ENCODE measurements at regions of chr1 and their contacts with region 1.

Region 1: DNA sequence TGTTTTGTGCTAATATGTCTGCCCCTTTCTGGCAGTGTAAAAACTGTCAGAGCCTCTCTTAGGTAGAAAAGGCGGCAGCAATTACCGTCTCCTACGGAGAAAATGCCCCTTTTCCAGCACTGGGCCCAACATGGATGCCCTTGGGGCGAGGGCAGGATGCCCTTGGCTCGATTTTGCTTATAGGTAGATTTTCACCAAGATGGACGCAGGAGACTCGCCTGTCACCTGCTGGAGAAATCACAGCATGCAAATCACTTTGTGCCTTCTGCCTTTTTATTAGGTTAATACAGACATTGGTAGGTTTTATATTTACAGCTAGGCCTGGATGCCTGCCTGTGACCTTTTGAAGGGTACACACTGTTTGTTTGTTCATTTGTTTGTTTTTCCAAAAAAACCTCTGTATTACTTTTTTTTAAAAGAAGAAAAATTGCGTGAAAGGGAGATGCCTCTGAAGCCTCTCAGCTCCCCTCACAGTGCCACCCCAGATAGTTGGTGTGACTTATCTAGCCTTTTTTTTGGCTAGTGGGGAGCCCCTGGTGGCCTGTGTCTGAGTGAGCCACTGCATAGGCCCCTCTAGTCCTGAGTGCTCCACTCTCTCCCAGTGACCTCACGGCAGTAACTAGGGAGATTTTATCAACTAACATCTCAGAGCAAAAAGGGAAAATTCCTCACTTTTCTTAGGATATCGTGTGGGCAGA is 2.5 kb downstream of the ATP1B1 start:
- DNase-seq: peak; percentile 42
- ATAC-seq: peak; percentile 47
- H3K4me3 ChIP-seq: peak overlapping the region; percentile 93 to 97
- H3K27ac ChIP-seq: peak overlapping the region; percentile 96
- H3K4me1 ChIP-seq: peaks cover 53% of the 10 kb centered on the region
- H3K27me3 ChIP-seq: no peaks in the 10 kb centered on the region
- CTCF ChIP-seq: peak; percentile 69

Region 2: DNA sequence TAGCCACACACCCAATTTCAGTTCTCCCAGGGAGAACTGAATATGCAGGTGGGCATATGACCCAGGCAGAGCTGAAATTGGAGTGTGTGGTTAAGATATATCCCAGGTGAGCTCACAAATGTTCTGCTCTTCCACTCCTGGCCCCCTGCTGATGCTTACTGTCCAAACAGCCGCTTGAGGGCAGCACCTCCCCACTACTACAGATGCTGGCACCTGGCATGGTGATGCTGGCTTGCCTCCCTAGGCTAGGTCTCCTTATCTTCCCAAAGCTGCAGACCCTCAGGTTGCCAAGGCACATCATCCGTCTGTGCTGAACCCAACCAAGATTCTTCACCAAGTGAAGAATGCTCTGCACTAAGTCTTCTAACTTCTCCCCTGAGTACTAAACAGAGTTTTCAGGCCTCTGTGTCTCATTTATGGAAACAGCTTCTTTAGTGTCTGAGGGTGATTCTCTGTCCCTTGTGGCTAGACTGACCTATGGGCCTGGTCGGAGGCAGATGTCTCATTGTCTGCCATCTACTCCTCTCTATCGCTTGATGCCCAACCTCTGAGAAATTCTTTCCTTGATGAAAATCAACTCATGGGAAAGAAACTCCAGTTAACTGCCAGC is 505.4 kb before region 1 on chr1:
- CTCF ChIA-PET with region 1: no interaction called
- POLR2A ChIA-PET with region 1: no interaction called
- in situ Hi-C with region 1: no loop called
- intact Hi-C with region 1: loop called (anchors 2 kb)
- DNase-seq: peak; percentile 48
- ATAC-seq: peak; percentile 98
- H3K4me3 ChIP-seq: no peak overlapping the region
- H3K27ac ChIP-seq: no peak overlapping the region
- H3K4me1 ChIP-seq: no peaks in the 10 kb centered on the region
- H3K27me3 ChIP-seq: no peaks in the 10 kb centered on the region
- CTCF ChIP-seq: peak; percentile 86

Region 3: DNA sequence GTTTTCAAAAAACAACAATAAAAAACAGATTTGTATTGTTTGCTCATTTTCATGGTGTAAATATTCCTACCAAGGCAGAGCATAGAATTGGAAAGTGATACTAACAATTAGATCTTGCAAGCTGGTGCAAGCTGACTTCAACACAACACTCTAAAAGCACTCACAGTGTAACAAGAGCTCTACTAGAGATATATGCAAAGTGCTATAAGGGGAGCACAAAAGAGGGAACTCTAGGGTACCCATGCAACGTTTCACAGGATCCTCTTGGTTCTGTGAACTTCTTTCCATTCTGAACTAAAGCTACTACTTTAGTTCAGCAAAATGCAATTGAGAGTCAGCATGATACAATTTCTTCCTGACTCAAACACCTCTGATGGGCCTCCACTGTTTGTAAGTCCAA is 75.8 kb after region 1 on chr1:
- CTCF ChIA-PET with region 1: no interaction called
- POLR2A ChIA-PET with region 1: no interaction called
- in situ Hi-C with region 1: no loop called
- intact Hi-C with region 1: no loop called
- DNase-seq: no peak
- ATAC-seq: no peak
- H3K4me3 ChIP-seq: no peak overlapping the region
- H3K27ac ChIP-seq: no peak overlapping the region
- H3K4me1 ChIP-seq: no peaks in the 10 kb centered on the region
- H3K27me3 ChIP-seq: no peaks in the 10 kb centered on the region
- CTCF ChIP-seq: no peak

Measured in Panc1 (cell line).